HEK293T (cell line): ENCODE measurements at regions of chr5 and their contacts with region 1.

Region 1: DNA sequence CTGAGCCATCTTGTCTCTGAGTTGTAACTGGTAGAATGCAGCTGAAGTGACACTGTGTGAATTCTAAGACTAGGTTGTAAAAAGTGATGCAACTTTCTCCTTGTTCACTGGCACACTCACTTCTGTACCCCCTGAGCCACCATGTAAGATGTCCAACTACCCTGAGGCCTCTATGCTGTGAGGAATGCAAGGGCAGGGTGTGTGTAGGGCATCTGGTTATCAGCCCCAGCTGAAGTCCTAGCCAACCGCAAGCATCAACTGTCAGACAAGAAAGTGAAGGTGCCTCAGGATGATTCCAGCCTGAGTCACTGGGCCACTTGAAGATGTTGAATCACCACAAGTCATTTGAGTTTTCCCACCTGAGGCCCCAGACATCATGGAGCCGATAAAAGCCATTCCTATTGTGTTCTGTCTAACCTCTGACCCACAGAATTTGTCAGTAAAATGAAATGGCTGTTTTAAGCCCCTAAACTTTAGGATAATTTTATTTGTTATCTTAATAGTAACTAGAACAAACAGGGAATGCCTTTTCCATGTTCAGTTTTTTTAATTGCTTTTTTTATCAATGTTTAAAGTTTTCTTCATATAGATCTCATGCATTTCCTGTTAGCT is 18.7 kb upstream of the RHOBTB3 start:
- DNase-seq: no peak

Region 2: GRCh38 chr5:95686651-95687050 is 25.8 kb before region 1 on chr5:
- CTCF ChIA-PET with region 1: no interaction called
- POLR2A ChIA-PET with region 1: no interaction called
- DNase-seq: no peak

Region 3: DNA sequence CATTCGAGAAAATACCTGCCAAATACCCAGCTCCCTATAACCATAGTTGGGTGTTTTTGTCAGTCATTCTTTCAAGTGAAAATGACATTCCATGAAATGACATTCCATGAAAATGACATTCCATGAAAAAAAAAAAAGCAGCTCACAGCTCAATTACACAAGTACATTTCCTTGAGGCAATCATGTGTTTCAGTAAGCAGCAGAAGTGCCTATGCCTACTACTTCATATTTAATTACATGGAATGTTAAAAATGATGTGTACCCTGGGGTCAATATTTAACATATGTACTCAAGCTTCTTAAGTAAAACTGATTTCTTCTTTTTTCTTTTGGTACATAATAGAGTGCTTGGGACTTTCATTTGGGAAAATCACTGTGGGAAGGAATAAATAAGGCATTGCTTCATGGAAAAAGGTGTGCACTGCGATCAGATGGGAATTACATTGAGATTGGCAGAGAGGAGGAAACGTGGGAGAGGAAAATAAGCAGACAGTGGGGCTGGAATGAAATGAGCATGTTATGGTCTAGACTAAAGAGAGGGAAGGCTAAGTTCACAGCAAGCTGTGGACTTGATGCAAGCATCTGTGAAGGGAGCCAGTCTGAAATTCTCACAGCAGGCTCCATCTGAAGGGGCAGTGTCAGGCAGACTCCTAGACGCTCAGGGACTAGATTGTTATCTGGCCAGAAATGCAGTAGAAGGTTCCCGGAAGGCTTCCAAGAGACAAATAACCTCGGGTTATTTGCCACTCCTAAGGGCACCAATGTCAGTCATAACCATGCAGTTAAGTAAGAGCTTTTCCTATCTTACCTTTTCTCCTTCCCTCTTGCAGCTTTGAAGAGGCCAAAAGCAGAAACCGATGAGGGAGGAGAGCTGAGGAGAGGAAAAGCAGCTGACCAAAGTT is 14.4 kb before region 1 on chr5:
- CTCF ChIA-PET with region 1: interaction called, 3 read pairs
- POLR2A ChIA-PET with region 1: interaction called, 26 read pairs
- DNase-seq: peak; percentile 40

Region 4: GRCh38 chr5:95723632-95724364 is 11.3 kb after region 1 on chr5:
- CTCF ChIA-PET with region 1: no interaction called
- POLR2A ChIA-PET with region 1: interaction called, 16 read pairs
- DNase-seq: peak; percentile 18